ENCODE measurements at regions of chr2 and their contacts with region 1.

Region 1: GRCh38 chr2:178280244-178280852 is 86.0 kb downstream of the OSBPL6 start:
- DNase-seq: no peak
- H3K4me3 ChIP-seq: no peak overlapping the region
- H3K27ac ChIP-seq: no peak overlapping the region
- H3K27me3 ChIP-seq: no peaks in the 10 kb centered on the region
- CTCF ChIP-seq: peak; percentile 62 to 86 (median 76)

Region 2: DNA sequence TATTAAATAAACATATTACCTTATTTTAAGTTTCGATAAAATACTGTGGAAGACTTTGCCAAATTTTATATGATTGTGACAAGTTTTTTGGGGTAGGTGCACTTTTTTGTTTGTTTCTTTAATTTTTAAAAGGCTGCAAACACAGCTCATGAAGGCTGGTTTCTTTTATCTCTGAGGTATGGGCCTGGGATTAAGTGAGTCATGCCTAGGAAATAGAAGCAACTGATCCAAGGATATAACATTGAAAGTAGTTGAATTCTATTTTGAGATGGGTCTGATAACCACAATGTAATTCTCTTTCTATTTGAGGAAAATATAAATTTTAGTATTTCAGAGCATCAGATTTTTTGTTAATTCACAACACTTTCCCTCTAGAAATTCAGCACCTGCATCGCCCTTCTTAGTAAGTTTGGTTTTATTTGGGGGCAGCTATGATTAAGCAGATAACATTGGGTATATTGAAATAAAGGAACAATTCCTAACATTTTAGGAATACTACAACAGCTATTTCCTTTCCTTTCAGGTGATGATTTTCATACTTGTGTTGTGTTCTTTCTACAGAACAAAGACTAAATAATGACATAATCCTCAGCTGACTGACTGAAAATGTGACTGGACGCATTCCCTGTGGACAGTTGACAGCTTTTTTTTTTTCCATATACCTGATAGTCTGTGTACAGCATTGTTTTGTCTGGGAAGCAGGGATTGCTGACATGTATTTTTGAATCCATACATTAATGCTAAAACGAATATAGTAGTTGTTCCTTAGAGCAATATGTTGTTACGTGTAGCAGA is 151.3 kb before region 1 on chr2:
- intact Hi-C with region 1: loop called (anchors 2 to 5 kb)
- DNase-seq: no peak
- H3K4me3 ChIP-seq: no peak overlapping the region
- H3K27ac ChIP-seq: no peak overlapping the region
- H3K27me3 ChIP-seq: no peaks in the 10 kb centered on the region
- CTCF ChIP-seq: no peak

Region 3: GRCh38 chr2:178429336-178429735 is 149.0 kb after region 1 on chr2:
- intact Hi-C with region 1: no loop called
- DNase-seq: no peak
- H3K4me3 ChIP-seq: no peak overlapping the region
- H3K27ac ChIP-seq: no peak overlapping the region
- H3K27me3 ChIP-seq: no peaks in the 10 kb centered on the region
- CTCF ChIP-seq: no peak